PC-3 (cell line): ENCODE measurements at regions of chr4 and their contacts with region 1.

Region 1: DNA sequence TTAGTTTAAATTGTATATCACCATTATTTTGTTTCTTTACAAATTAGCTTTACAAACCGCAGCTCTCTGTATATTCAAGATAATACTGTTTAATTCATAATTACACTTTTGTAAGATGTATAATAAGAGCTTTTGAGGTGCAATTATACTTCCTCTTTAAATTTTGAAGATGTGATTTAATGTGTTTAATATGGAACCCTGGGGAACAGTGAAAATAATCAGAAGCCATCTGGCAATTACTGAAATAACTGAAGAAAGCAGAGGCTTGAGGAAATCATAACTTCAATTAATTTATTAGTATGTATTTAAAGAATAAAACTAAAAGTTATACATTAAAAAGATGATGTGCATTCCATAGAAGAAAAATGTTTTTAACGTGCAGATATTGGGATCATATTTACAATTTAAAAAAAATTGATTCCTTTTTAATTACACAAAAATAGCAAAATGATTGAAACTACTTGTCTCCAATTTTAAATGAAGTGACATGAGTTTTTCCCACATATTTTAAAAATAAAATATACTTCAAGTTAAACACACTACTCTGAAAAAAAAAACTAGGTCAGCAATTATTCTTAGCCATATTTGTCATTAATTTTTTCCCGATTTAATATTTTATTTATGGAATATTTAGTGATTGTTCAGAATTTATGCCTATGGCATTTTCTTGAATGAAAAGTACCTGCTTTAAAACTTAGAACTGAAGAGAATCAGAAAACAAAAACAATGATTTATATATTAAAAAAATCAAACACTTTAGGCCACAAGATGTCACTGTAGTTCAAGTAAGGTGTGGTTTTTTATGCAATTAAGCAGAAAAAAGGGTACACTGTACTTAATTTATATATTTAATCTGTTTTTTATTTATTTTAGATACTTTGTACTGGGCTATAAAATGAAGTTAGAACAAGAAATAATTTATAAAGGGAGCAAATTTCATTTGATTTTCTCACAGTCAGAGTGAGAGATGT is 942.7 kb upstream of the NDST4 start:
- DNase-seq: peak; percentile 49
- ATAC-seq: no peak
- H3K4me3 ChIP-seq: no peak overlapping the region
- H3K27ac ChIP-seq: no peak overlapping the region
- H3K4me1 ChIP-seq: no peaks in the 10 kb centered on the region
- H3K27me3 ChIP-seq: no peaks in the 10 kb centered on the region
- CTCF ChIP-seq: peak; percentile 46; the same call in 1 of the 2 replicates

Region 2: GRCh38 chr4:115119804-115120352 is 936.3 kb before region 1 on chr4:
- CTCF ChIA-PET with region 1: no interaction called
- POLR2A ChIA-PET with region 1: no interaction called
- intact Hi-C with region 1: loop called (anchors 5 kb)
- DNase-seq: no peak
- ATAC-seq: no peak
- H3K4me3 ChIP-seq: no peak overlapping the region
- H3K27ac ChIP-seq: no peak overlapping the region
- H3K4me1 ChIP-seq: no peaks in the 10 kb centered on the region
- H3K27me3 ChIP-seq: no peaks in the 10 kb centered on the region
- CTCF ChIP-seq: 0 out of 2 replicates have a peak, but pooled peaks have one; percentile 17

Region 3: GRCh38 chr4:116150152-116150551 is 94.0 kb after region 1 on chr4:
- CTCF ChIA-PET with region 1: no interaction called
- POLR2A ChIA-PET with region 1: no interaction called
- intact Hi-C with region 1: loop called (anchors 1 kb)
- DNase-seq: peak; percentile 36
- ATAC-seq: peak; percentile 75
- H3K4me3 ChIP-seq: no peak overlapping the region
- H3K27ac ChIP-seq: no peak overlapping the region
- H3K4me1 ChIP-seq: no peaks in the 10 kb centered on the region
- H3K27me3 ChIP-seq: no peaks in the 10 kb centered on the region
- CTCF ChIP-seq: peak; percentile 52

Region 4: DNA sequence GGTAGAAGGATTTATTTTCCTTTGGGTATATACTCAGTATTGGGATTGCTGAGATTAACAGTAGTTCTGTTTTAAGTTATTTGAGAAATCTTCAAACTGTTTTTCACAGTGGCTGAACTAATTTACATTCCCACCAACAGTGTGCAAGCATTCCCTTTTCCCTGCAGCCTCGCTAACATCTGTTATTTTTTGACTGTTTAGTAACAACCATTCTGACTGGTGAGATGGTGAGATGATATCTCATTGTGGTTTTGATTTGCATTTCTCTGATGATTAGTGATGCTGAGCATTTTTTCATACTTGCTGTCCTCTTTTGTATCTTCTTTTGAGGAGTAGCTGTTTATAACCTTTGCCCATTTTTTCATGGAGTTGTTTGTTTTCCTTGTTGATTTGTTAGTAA is 571.4 kb after region 1 on chr4:
- CTCF ChIA-PET with region 1: no interaction called
- POLR2A ChIA-PET with region 1: no interaction called
- intact Hi-C with region 1: no loop called
- DNase-seq: no peak
- ATAC-seq: no peak
- H3K4me3 ChIP-seq: no peak overlapping the region
- H3K27ac ChIP-seq: no peak overlapping the region
- H3K4me1 ChIP-seq: no peaks in the 10 kb centered on the region
- H3K27me3 ChIP-seq: no peaks in the 10 kb centered on the region
- CTCF ChIP-seq: no peak